WTC11 (cell line): ENCODE measurements at regions of chr10 and their contacts with region 1.

Region 1: GRCh38 chr10:124450012-124450781 is at the start of gene NKX1-2:
- DNase-seq: peak; percentile 81
- ATAC-seq: peak; percentile 40
- H3K4me3 Mint-ChIP-seq: peak within 1 kb of the TSS; percentile 80
- H3K27ac Mint-ChIP-seq: peak within 1 kb of the TSS; percentile 89
- H3K4me1 Mint-ChIP-seq: peaks cover 60% of the 10 kb centered on the region
- H3K27me3 Mint-ChIP-seq: peaks cover 58% of the 10 kb centered on the region
- CTCF ChIP-seq: no peak
- total RNA-seq, gene NKX1-2: 30.8 to 57.7 TPM (median 31.0 TPM) in 3 replicates

Region 2: DNA sequence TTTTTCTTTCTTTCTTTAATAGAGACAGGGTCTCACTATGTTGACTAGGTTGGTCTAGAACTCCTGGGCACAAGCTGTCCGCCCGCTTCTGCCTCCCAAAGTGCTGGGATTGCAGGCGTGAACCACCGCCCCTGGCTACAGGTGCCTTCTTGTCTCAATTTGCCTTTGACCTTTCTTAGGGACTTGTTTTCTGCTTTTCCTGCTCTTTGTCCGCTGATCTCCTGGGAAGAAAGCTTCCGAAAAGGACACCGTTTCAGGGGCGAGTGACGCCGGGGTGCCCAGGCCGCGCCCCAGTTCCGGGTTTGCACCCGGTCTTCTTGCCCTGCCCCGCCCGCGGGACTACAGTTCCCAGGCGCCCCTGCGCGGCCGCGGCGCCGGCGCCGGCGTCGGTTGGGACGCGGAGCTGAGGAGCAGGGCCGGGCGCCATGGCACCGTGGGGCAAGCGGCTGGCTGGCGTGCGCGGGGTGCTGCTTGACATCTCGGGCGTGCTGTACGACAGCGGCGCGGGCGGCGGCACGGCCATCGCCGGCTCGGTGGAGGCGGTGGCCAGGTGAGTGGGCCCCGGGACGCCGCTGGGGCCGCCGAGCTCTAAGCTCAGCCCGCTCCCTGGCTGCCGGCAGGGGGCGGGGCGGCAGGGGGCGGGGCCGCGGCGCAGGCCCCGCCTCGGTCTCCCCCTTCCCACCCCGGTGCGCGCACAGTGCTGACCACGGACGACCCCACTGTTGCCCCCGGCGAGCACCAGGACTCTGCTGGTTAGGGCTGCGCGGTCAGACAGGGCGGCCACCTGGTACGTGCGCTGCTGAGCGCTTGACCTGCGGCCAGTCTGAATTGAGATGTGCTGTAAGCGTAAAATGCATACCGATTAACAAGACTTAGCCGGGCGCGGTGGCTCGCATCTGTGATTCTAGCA is 11.5 kb after region 1 on chr10 and contains the start of gene LHPP:
- CTCF ChIA-PET with region 1: interaction called, 32 read pairs
- POLR2A ChIA-PET with region 1: interaction called, 4 read pairs
- DNase-seq: peak; percentile 81
- ATAC-seq: peak; percentile 83
- H3K4me3 Mint-ChIP-seq: peak within 1 kb of the TSS; percentile 86
- H3K27ac Mint-ChIP-seq: peak within 1 kb of the TSS; percentile 96
- H3K4me1 Mint-ChIP-seq: peaks cover 52% of the 10 kb centered on the region
- H3K27me3 Mint-ChIP-seq: peaks cover 5% of the 10 kb centered on the region
- CTCF ChIP-seq: 0 out of 2 replicates have a peak, but pooled peaks have one; percentile 24
- total RNA-seq, gene LHPP: 33.2 to 42.4 TPM (median 41.1 TPM) in 3 replicates